ENCODE measurements at regions of chr5 and their contacts with region 1.

Region 1: GRCh38 chr5:67209142-67209771 is 12.7 kb upstream of the CD180 start:
- DNase-seq: peak; percentile 37
- H3K4me3 ChIP-seq: no peak overlapping the region
- H3K27ac ChIP-seq: no peak overlapping the region
- H3K27me3 ChIP-seq: peaks cover 2% of the 10 kb centered on the region
- CTCF ChIP-seq: peak; percentile 72

Region 2: DNA sequence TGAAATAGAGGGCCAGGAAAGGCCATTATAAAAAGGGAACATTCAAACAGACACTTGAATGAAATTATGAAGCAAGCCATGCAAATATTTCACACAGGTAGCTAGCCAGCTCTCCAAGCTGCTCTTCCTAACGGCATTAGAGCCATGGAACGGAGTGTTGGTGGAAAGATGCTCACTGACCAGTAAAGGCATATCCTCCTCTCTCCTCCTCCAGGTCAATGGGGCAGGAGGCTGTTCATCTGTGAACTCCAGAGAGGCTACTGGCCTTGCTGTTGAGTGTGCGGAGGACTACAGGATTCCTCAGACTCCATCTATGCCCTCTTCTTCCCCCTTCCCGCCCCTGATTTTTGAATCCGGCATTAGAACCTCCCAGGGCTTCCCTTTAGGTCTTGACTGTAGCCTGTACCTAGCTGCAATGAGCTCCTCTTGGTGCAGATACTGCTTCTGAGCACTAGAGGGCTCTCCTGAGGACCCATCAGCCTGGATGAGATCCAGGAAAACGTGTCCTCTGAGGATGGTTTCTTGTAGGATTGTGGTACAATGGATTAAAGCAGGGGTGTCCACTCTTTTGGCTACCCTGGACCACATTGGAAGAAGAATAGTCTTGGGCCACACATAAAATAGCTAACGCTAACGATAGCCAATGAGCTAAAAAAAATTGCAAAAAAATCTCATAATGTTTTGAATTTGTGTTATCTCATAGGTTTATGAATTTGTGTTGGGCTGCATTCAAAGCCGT is 903.0 kb before region 1 on chr5:
- CTCF ChIA-PET with region 1: interaction called, 18 read pairs
- POLR2A ChIA-PET with region 1: no interaction called
- DNase-seq: peak; percentile 38
- H3K4me3 ChIP-seq: no peak overlapping the region
- H3K27ac ChIP-seq: no peak overlapping the region
- H3K27me3 ChIP-seq: peaks cover 2% of the 10 kb centered on the region
- CTCF ChIP-seq: peak; percentile 92

Region 3: DNA sequence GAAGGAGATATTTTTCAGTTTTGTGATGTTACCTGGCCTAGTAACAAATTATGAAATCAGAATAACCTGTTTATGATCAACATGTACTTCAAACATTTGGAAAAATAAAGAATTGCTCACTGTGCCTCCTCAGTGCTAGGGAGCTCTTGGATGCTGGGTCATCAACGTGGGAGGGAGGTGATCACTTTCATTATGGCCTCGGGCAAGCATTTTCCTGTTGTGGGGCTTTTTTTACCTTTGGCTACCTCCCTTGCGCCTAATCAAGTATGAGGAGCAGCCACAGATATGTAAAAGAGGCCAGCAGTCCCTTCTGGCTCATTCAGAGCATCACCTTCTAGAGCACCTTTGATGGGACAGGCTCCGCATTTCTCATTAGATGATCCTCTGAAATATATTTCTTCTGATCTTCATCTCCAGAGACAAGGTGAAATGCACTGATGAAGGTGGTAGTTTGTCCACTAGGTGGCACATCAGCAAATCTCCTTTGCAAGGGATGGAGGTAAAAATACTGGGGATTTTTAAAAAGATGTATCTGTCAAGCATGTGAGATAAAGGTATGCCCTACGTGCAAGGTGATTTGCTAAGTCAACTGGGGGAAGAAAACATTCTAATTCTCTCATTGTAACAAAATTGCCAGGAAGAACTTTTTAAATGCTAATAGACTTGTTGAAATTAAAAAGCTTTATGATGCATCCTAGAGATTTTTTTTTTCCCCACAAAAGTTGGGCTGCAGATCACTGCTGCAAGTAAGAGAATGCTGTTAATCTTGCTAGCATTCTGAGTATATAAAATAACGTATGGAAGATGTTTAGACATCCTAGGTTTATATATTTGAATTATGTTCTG is 394.9 kb before region 1 on chr5:
- CTCF ChIA-PET with region 1: interaction called, 38 read pairs
- POLR2A ChIA-PET with region 1: no interaction called
- DNase-seq: no peak
- H3K4me3 ChIP-seq: no peak overlapping the region
- H3K27ac ChIP-seq: no peak overlapping the region
- H3K27me3 ChIP-seq: peaks cover 23% of the 10 kb centered on the region
- CTCF ChIP-seq: peak; percentile 80

Region 4: DNA sequence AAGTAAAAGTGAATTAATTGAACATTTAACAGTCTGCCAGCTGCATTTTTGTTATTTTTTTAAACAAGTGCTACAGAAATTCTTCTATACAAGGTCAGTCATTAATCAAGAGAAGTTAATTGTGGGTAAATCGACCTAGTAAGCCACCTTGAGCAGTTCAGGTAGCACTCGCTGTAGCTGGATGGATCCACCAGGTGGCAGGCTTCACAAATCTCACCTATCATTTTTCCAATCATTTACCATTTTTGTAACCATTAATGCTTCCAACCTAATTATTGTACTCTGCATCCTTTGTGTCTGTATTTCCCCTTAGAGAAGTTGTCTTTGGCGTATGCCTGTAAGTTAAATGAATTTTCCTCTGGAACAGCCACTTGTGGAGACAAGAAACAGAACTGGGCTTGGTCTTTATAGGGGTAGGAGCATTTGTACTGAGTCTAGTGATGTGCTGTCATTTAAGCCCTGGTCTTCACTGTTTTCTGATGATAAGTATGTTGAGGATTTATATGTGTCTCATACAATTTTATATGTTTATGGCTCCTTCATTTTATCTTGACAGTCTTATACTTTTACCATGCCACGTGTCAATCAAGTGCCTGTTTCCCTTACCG is 52.2 kb before region 1 on chr5:
- CTCF ChIA-PET with region 1: interaction called, 33 read pairs
- POLR2A ChIA-PET with region 1: no interaction called
- DNase-seq: no peak
- H3K4me3 ChIP-seq: no peak overlapping the region
- H3K27ac ChIP-seq: no peak overlapping the region
- H3K27me3 ChIP-seq: no peaks in the 10 kb centered on the region
- CTCF ChIP-seq: peak; percentile 79

Region 5: GRCh38 chr5:67165526-67166459 is 43.5 kb before region 1 on chr5:
- CTCF ChIA-PET with region 1: interaction called, 73 read pairs
- POLR2A ChIA-PET with region 1: no interaction called
- DNase-seq: peak; percentile 29
- H3K4me3 ChIP-seq: no peak overlapping the region
- H3K27ac ChIP-seq: peak overlapping the region; percentile 21
- H3K27me3 ChIP-seq: no peaks in the 10 kb centered on the region
- CTCF ChIP-seq: peak; percentile 78

Region 6: DNA sequence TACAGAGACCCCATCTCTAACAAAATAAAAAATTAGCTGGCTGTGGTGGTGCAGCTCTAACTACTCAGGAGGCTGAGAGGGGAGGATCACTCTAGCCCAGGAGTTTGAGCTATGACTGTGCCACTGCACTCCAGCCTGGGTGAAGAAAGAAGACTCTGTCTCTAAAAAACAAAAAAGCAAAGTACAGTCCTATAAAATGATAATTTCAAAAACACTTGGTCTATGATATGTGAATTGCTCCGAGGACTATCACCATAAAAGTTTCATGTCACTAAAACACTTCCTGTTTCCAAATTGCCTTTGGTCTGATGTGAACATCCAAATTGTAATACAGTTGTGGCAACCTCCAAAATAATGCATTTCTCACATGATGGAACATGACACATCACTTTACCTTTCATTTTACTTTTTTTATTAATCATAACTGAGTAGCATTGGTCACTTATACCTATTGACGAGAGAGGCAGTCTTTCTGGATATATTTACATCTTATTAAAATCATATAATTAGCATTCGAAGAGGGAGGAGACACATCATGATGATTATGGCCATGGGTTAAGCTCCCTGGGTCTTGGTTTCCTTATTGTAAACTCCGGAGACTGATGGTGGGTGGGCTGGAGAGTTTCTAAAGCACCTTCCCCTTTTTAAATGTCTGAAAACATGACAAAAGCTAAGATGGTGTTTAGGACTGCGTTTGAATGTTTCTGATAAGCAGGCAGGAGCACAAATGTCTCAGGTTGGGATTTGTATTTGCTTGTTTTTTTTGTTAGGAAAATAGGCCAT is 13.2 kb after region 1 on chr5:
- CTCF ChIA-PET with region 1: interaction called, 10 read pairs
- POLR2A ChIA-PET with region 1: no interaction called
- DNase-seq: no peak
- H3K4me3 ChIP-seq: no peak overlapping the region
- H3K27ac ChIP-seq: no peak overlapping the region
- H3K27me3 ChIP-seq: peaks cover 2% of the 10 kb centered on the region
- CTCF ChIP-seq: no peak

Region 7: DNA sequence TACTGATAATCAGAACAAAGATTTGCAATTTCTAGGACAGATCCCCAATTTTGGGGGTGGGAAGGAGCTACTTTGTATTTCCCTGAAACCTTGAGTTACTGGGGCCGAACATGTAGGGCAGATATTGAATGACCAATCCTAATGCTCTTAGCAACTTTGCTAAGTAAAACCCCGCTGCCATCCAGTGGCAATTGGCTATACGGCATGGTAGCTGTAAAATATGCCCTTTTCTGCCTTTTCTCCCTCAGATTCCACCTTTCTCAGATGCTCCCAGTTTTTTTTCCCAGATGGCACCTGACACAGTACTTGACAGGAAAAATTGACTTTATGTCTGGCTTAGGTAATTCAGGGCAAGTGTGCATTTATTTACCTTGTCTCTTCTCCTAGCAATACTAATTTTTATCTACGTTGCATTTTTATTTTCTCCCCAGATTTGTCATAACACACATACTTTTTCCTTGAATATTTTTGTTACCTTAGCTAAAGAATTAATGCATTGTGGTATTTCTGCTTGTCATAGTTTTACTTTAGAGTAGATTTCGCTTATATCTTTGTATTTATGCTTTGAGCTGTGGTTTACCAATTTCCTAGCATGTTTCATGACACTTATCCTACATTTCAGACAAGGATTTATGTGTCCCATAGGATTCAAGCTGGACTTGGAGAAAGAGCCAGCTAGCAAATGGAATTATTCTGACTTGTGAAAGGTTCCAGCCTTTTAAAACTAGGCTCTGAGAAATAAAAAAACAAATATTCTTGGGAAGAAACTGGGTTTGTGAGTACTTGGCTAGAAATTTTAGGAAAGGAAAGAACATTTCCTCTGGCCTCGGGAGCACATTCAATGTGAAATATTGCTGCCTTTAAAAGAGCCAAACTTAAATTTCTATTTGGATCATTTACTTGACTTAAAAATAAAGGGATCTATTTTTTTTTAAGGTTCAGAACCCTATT is 1043.7 kb after region 1 on chr5:
- CTCF ChIA-PET with region 1: interaction called, 10 read pairs
- POLR2A ChIA-PET with region 1: no interaction called
- DNase-seq: peak; percentile 42
- H3K4me3 ChIP-seq: no peak overlapping the region
- H3K27ac ChIP-seq: no peak overlapping the region
- H3K27me3 ChIP-seq: no peaks in the 10 kb centered on the region
- CTCF ChIP-seq: peak; percentile 93

Measured in AG04450 (cell line).